ENCODE measurements at regions of chr1 and their contacts with region 1.

Region 1: GRCh38 chr1:51170342-51170741 is 65.7 kb upstream of the RNF11 start:
- DNase-seq: peak; percentile 79 to 94 (median 92)
- H3K4me3 ChIP-seq: no peak overlapping the region
- H3K4me3 Mint-ChIP-seq: no peak overlapping the region
- H3K27ac ChIP-seq: peak overlapping the region; percentile 39 to 76
- H3K27ac Mint-ChIP-seq: peak overlapping the region; percentile 50 to 96 (median 85)
- H3K4me1 ChIP-seq: peaks cover 56 to 67% of the 10 kb centered on the region in 2 donors
- H3K4me1 Mint-ChIP-seq: peaks cover 51% of the 10 kb centered on the region
- H3K27me3 ChIP-seq: no peaks in the 10 kb centered on the region
- H3K27me3 Mint-ChIP-seq: peaks cover 0 to 5% (median 1%) of the 10 kb centered on the region in 3 donors
- CTCF ChIP-seq: no peak

Region 2: GRCh38 chr1:50959913-50960844 is 210.2 kb before region 1 on chr1 and contains the start of gene FAF1:
- intact Hi-C with region 1: loop called in 1 of 2 experiments (anchors 10 kb)
- DNase-seq: peak; percentile 95 to 98 (median 96)
- H3K4me3 ChIP-seq: peak within 1 kb of the TSS; percentile 80 to 98 (median 81)
- H3K4me3 Mint-ChIP-seq: peak within 1 kb of the TSS; percentile 91 to 92
- H3K27ac ChIP-seq: peak within 1 kb of the TSS; percentile 72 to 83
- H3K27ac Mint-ChIP-seq: peak within 1 kb of the TSS; percentile 88 to 96 (median 92)
- H3K4me1 ChIP-seq: peaks cover 16 to 28% of the 10 kb centered on the region in 2 donors
- H3K4me1 Mint-ChIP-seq: peaks cover 23% of the 10 kb centered on the region
- H3K27me3 ChIP-seq: no peaks in the 10 kb centered on the region
- H3K27me3 Mint-ChIP-seq: peaks cover 0 to 2% (median 0%) of the 10 kb centered on the region in 3 donors
- CTCF ChIP-seq: no peak
- polyA plus RNA-seq, gene FAF1: 11.4 to 29.6 (median 16.9) TPM

Region 3: GRCh38 chr1:50969611-50970508 is 200.5 kb before region 1 on chr1 and contains the start of gene CDKN2C:
- intact Hi-C with region 1: loop called (anchors 10 kb)
- DNase-seq: peak in 2 of 3 donors; percentile 30 to 43
- H3K4me3 ChIP-seq: peak within 1 kb of the TSS; percentile 87 to 98 (median 97)
- H3K4me3 Mint-ChIP-seq: peak within 1 kb of the TSS; percentile 99 to 100
- H3K27ac ChIP-seq: peak within 1 kb of the TSS; percentile 86 to 94
- H3K27ac Mint-ChIP-seq: peak within 1 kb of the TSS; percentile 83 to 97 (median 96)
- H3K4me1 ChIP-seq: peaks cover 17 to 38% of the 10 kb centered on the region in 2 donors
- H3K4me1 Mint-ChIP-seq: peaks cover 30% of the 10 kb centered on the region
- H3K27me3 ChIP-seq: no peaks in the 10 kb centered on the region
- H3K27me3 Mint-ChIP-seq: peaks cover 2% of the 10 kb centered on the region in 3 donors
- CTCF ChIP-seq: no peak
- polyA plus RNA-seq, gene CDKN2C: 5.3 to 9.9 (median 7.4) TPM

Region 4: GRCh38 chr1:51235673-51236530 is 65.6 kb after region 1 on chr1 and contains the start of gene RNF11:
- intact Hi-C with region 1: loop called in 1 of 2 experiments (anchors 5 kb)
- DNase-seq: peak; percentile 84 to 88 (median 86)
- H3K4me3 ChIP-seq: peak within 1 kb of the TSS; percentile 72 to 98 (median 92)
- H3K4me3 Mint-ChIP-seq: peak within 1 kb of the TSS; percentile 88 to 99
- H3K27ac ChIP-seq: peak within 1 kb of the TSS; percentile 72 to 99
- H3K27ac Mint-ChIP-seq: peak within 1 kb of the TSS in 6 of 7 donors; percentile 88 to 100 (median 96)
- H3K4me1 ChIP-seq: peaks cover 26 to 37% of the 10 kb centered on the region in 2 donors
- H3K4me1 Mint-ChIP-seq: peaks cover 22% of the 10 kb centered on the region
- H3K27me3 ChIP-seq: no peaks in the 10 kb centered on the region
- H3K27me3 Mint-ChIP-seq: peaks cover 0 to 6% (median 0%) of the 10 kb centered on the region in 3 donors
- CTCF ChIP-seq: no peak
- polyA plus RNA-seq, gene RNF11: 25.3 to 30.4 (median 28.4) TPM

Measured in CD14-positive monocyte (primary cell).